ENCODE measurements at regions of chr19 and their contacts with region 1.

Region 1: DNA sequence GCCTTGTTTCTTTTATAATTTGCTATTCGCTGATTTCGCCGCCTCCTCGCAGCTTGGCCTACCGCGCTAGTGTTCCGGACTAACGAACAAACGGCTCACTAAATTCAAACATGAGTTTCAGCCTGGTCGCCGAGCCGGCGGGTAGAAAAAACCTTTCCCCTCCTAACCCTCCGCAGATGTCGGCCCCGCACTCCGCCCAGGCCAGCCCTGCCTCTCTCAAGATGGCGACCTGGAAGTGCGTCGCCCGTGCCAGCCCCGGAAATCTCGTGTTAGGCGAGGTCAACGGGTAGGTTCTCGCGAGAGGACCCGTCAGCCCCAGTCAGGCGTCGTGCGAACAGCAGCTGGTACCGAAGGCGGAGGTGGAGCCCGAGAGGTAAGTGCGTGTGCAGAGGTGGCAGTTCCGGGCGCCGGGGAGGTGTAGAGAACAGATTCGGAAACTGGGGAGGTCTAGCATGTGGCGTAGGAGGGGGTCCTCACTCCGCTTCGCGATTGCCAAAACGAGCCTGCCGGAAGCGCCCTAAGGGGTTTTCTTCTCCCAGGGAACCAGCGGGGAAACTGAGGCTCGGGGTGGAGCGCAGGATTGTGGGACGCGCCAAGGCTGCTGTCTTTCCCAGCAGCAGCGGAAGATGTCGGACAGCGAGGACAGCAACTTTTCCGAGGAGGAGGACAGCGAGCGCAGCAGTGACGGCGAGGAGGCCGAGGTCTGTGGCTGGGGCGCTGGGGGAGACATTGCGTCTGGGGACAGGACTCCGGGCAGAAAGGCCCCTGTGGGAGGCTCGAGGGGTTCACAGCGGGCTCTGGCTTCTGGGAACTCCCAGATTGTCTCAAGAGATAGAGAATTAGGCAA is at the start of gene SUPT5H:
- DNase-seq: peak; percentile 94 to 95
- H3K4me3 ChIP-seq: peak within 1 kb of the TSS; percentile 83
- H3K27ac ChIP-seq: peak within 1 kb of the TSS; percentile 97
- H3K4me1 ChIP-seq: peaks cover 30% of the 10 kb centered on the region
- H3K27me3 ChIP-seq: no peaks in the 10 kb centered on the region
- CTCF ChIP-seq: no peak
- total RNA-seq, gene SUPT5H: 99.7 and 118 TPM in 2 replicates

Region 2: GRCh38 chr19:39390755-39391592 is 54.5 kb before region 1 on chr19 and contains the starts of genes MED29 and PAF1:
- CTCF ChIA-PET with region 1: no interaction called
- POLR2A ChIA-PET with region 1: no interaction called
- intact Hi-C with region 1: loop called (anchors 5 kb)
- DNase-seq: peak; percentile 96 to 98
- H3K4me3 ChIP-seq: peak within 1 kb of the TSS; percentile 97
- H3K27ac ChIP-seq: peak within 1 kb of the TSS; percentile 86
- H3K4me1 ChIP-seq: peaks cover 14% of the 10 kb centered on the region
- H3K27me3 ChIP-seq: no peaks in the 10 kb centered on the region
- CTCF ChIP-seq: no peak; the same call in 1 of the 2 replicates
- total RNA-seq, gene MED29: 18.6 and 30.9 TPM in 2 replicates
- total RNA-seq, gene PAF1: 54.3 and 61.1 TPM in 2 replicates

Region 3: GRCh38 chr19:39469036-39469435 is 23.5 kb after region 1 on chr19:
- CTCF ChIA-PET with region 1: no interaction called
- POLR2A ChIA-PET with region 1: no interaction called
- intact Hi-C with region 1: no loop called
- DNase-seq: no peak
- H3K4me3 ChIP-seq: no peak overlapping the region
- H3K27ac ChIP-seq: no peak overlapping the region
- H3K4me1 ChIP-seq: no peaks in the 10 kb centered on the region
- H3K27me3 ChIP-seq: no peaks in the 10 kb centered on the region
- CTCF ChIP-seq: no peak

Region 4: DNA sequence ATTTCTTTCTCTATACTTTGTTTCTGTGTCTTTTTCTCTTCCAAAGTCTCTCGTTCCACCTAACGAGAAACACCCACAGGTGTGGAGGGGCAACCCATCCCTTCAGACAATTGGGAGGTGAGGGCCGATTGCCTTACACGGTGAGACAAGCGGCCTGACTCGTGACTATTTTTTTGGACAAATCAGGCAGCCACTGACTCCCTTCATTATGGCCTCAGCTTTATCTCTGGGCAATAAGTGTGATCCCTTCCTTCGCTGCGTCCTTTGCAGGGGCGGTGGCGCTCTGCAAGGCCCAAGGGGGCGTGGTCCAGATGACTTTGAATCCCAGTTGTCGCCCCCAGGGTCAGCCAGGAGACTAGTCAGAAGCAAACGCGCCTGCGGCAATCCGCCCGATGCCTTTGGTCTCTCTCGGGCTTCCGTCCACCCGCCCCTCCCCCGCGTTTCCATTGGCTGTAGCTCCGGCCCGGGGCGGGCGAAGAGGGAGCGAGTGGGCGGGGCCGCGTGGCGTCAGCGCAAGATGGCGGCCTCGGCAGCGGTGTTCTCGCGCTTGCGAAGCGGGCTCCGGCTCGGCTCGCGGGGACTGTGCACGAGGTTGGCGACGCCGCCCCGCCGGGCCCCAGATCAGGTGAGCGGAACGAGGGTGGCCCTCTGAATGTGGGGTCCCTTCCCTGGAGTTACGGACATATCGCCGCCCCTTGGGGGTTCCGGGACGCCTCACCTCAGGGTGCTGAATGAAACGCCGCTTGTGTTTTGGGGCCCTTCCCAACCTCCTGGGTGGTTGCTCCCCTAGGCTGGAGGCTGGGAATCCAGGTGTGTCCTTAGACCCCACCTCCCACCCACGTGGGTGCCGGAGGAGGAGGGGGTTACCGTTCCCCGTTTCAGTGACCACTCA is 35.1 kb after region 1 on chr19 and contains the start of gene TIMM50:
- CTCF ChIA-PET with region 1: interaction called, 14 read pairs
- POLR2A ChIA-PET with region 1: interaction called, 18 read pairs
- intact Hi-C with region 1: loop called (anchors 5 kb)
- DNase-seq: peak; percentile 88 to 98
- H3K4me3 ChIP-seq: peak within 1 kb of the TSS; percentile 99
- H3K27ac ChIP-seq: peak within 1 kb of the TSS; percentile 94
- H3K4me1 ChIP-seq: peaks cover 13% of the 10 kb centered on the region; the same call in 1 of the 2 replicates
- H3K27me3 ChIP-seq: no peaks in the 10 kb centered on the region
- CTCF ChIP-seq: no peak
- total RNA-seq, gene TIMM50: 85.5 and 95.9 TPM in 2 replicates

Region 5: DNA sequence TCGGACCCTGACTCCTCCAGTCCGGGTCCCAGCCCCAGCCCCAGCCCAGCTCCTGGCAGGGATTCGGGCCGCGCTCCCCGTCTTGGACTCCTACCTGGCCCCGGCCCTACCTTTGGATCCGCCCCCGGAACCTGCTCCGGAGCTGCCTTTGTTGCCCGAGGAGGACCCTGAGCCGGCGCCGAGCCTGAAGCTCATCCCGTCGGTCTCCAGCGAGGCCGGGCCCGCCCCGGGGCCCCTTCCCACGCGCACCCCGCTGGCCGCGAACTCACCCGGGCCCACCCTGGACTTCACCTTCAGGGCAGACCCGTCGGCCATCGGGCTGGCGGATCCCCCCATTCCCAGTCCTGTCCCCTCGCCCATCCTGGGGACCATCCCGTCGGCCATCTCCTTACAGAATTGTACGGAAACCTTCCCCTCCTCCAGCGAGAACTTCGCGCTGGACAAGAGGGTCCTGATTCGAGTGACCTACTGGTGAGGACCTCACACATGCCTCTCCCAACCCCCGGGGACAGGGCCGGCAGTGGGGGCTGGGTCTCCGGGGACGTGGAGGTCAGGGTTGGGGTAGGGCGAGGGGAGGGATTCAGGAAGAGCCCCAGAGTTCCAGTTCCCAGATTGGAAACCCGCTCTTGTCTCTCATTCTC is 70.2 kb after region 1 on chr19:
- CTCF ChIA-PET with region 1: interaction called, 20 read pairs
- POLR2A ChIA-PET with region 1: no interaction called
- intact Hi-C with region 1: no loop called
- DNase-seq: no peak
- H3K4me3 ChIP-seq: no peak overlapping the region
- H3K27ac ChIP-seq: no peak overlapping the region
- H3K4me1 ChIP-seq: no peaks in the 10 kb centered on the region
- H3K27me3 ChIP-seq: peaks cover 3% of the 10 kb centered on the region; the same call in 1 of the 2 replicates
- CTCF ChIP-seq: no peak

Region 6: GRCh38 chr19:39532233-39533002 is 86.9 kb after region 1 on chr19 and contains the start of gene EID2B:
- CTCF ChIA-PET with region 1: interaction called, 8 read pairs
- POLR2A ChIA-PET with region 1: interaction called, 5 read pairs
- intact Hi-C with region 1: loop called (anchors 1 kb)
- DNase-seq: peak; percentile 82 to 92
- H3K4me3 ChIP-seq: peak within 1 kb of the TSS; percentile 91
- H3K27ac ChIP-seq: no peak within 1 kb of the TSS
- H3K4me1 ChIP-seq: peaks cover 10% of the 10 kb centered on the region; the same call in 1 of the 2 replicates
- H3K27me3 ChIP-seq: no peaks in the 10 kb centered on the region
- CTCF ChIP-seq: peak; percentile 94
- total RNA-seq, gene EID2B: 2.3 and 3.4 TPM in 2 replicates

Region 7: GRCh38 chr19:39557441-39558151 is 112.1 kb after region 1 on chr19:
- CTCF ChIA-PET with region 1: interaction called, 20 read pairs
- POLR2A ChIA-PET with region 1: no interaction called
- intact Hi-C with region 1: no loop called
- DNase-seq: peak; percentile 44 to 75
- H3K4me3 ChIP-seq: no peak overlapping the region
- H3K27ac ChIP-seq: no peak overlapping the region
- H3K4me1 ChIP-seq: peaks cover 10% of the 10 kb centered on the region; the same call in 1 of the 2 replicates
- H3K27me3 ChIP-seq: peaks cover 34% of the 10 kb centered on the region
- CTCF ChIP-seq: no peak

Region 8: DNA sequence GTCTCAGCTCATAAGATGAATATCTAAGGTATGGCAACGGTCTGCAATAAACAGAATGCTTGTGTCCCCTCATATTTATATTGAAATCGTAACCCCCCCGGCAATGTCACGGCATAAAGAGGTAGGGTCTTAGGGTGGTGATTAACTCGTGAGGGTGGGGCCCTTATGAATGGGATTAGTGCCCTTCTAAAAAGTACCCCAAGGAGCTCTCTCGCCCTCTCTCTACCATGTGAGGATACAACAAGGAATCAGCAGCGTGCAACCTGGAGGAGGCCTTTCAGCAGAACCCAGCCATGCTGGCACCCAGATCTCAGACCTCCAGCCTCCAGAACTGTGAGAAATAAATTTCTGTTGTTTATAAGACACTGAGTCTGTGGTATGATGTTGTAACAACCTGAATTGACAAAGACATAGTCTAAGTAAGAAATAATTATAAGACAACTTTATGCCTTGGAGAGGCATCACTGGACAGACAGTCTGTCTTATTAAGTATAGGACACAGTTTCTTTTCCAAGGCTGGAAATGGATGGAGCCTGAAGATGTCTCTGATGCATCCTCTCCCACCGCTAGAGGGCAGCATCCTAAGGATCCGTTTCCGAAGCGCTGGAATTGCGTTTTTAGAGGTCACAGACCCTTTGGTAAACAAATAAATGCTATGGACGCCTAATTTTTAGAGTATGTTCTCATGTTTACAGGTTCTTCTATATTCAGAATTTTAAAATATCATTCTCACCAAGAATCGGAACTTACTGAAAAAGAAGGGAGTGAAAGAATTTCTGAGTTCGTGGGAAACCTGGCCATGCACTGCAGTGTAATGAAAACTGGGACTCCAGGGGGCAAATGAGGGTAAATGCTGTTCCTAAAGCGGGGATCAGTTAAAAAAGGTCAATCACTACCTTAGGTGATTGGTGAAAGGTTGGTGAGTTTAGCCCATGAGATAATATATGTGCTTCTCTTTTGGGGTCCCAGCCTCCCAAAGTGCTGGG is 319.9 kb after region 1 on chr19:
- CTCF ChIA-PET with region 1: no interaction called
- POLR2A ChIA-PET with region 1: no interaction called
- intact Hi-C with region 1: loop called (anchors 10 kb)
- DNase-seq: peak in 1 of 2 experiments; percentile 21
- H3K4me3 ChIP-seq: no peak overlapping the region
- H3K27ac ChIP-seq: no peak overlapping the region
- H3K4me1 ChIP-seq: no peaks in the 10 kb centered on the region
- H3K27me3 ChIP-seq: peaks cover 48% of the 10 kb centered on the region
- CTCF ChIP-seq: peak; percentile 87

Measured in PC-9 (cell line).